ENCODE measurements at regions of chr13 and their contacts with region 1.

Region 1: GRCh38 chr13:110715395-110716235 is 2.1 kb downstream of the ING1 start:
- DNase-seq: peak; percentile 98
- ATAC-seq: peak; percentile 67
- H3K4me3 Mint-ChIP-seq: peak overlapping the region; percentile 87
- H3K27ac Mint-ChIP-seq: peak overlapping the region; percentile 97
- H3K4me1 Mint-ChIP-seq: peaks cover 29% of the 10 kb centered on the region
- H3K27me3 Mint-ChIP-seq: no peaks in the 10 kb centered on the region

Region 2: DNA sequence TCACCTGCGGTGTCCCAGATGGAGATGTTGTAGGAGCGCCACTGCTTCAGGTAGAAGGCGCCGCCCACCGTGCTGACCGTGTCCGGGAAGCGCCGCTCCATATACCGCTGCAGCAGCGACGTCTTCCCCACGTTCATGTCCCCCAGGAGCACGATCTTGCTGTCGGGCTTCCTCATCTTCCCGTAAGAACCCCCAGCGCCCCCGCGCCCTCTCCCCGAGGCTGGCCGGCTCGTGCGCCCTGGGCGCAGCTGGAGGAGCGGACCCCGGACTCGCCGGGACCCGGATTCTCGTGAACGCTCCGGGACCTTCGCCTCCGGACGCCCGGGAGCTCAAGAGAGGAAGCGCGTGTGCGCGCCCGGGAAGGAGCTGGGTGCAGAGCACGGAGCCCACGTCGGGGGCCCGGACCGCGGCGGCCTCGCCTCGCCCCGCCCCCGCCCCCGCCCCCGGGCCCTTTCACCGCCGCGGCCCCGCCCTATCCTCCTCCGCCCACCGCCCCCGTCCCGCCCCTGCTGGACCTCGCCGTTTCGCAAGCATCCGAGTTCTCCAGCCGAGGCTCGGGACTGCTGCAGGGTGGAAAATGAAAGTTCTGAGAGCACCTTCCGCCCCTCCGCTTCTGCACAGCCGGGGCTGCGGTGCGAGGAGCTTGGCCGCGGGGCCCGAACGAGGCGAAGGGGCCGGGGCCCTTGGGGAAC is 154.1 kb before region 1 on chr13 and contains the start of gene RAB20:
- CTCF ChIA-PET with region 1: no interaction called
- POLR2A ChIA-PET with region 1: no interaction called
- intact Hi-C with region 1: loop called in 1 of 2 experiments (anchors 2 kb)
- DNase-seq: peak; percentile 76
- ATAC-seq: peak; percentile 79
- H3K4me3 Mint-ChIP-seq: peak within 1 kb of the TSS; percentile 77
- H3K27ac Mint-ChIP-seq: peak within 1 kb of the TSS; percentile 85
- H3K4me1 Mint-ChIP-seq: peaks cover 18% of the 10 kb centered on the region
- H3K27me3 Mint-ChIP-seq: peaks cover 4% of the 10 kb centered on the region
- total RNA-seq, gene RAB20: 6.0 to 9.0 TPM

Region 3: GRCh38 chr13:110615322-110616102 is 100.1 kb before region 1 on chr13 and contains the start of gene NAXD:
- CTCF ChIA-PET with region 1: no interaction called
- POLR2A ChIA-PET with region 1: interaction called, 4 read pairs
- intact Hi-C with region 1: loop called (anchors 1 kb)
- DNase-seq: peak; percentile 92
- ATAC-seq: peak; percentile 94
- H3K4me3 Mint-ChIP-seq: peak within 1 kb of the TSS; percentile 88
- H3K27ac Mint-ChIP-seq: peak within 1 kb of the TSS; percentile 96
- H3K4me1 Mint-ChIP-seq: peaks cover 41% of the 10 kb centered on the region
- H3K27me3 Mint-ChIP-seq: no peaks in the 10 kb centered on the region
- total RNA-seq, gene NAXD: 19.6 to 23.3 TPM

Region 4: DNA sequence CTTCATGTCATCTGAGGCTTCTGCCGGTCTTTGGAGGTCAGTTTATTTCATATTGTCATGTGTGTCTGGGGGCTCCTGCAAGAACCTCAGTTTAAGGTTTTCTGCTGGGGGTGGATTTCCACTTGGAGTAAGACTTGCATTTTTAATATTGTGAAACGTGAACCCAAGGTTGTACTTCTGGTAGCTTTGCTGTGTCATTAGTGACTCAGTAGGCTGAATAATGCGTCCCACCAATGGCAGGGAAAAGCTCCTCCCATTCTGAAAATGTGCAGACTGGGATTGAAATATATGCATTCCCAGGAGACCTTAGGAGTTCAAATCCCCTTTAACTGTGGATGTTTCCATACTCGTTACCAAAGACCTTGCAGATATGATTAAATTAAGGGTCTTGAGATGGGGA is 44.1 kb after region 1 on chr13:
- CTCF ChIA-PET with region 1: no interaction called
- POLR2A ChIA-PET with region 1: no interaction called
- intact Hi-C with region 1: no loop called
- DNase-seq: no peak
- ATAC-seq: no peak
- H3K4me3 Mint-ChIP-seq: no peak overlapping the region
- H3K27ac Mint-ChIP-seq: no peak overlapping the region
- H3K4me1 Mint-ChIP-seq: no peaks in the 10 kb centered on the region
- H3K27me3 Mint-ChIP-seq: peaks cover 19% of the 10 kb centered on the region

Region 5: GRCh38 chr13:110819203-110820014 is 103.8 kb after region 1 on chr13:
- CTCF ChIA-PET with region 1: interaction called, 3 read pairs
- POLR2A ChIA-PET with region 1: interaction called, 4 read pairs
- intact Hi-C with region 1: loop called in 1 of 2 experiments (anchors 5 kb)
- DNase-seq: peak; percentile 89
- ATAC-seq: peak; percentile 89
- H3K4me3 Mint-ChIP-seq: no peak overlapping the region
- H3K27ac Mint-ChIP-seq: no peak overlapping the region
- H3K4me1 Mint-ChIP-seq: peaks cover 5% of the 10 kb centered on the region
- H3K27me3 Mint-ChIP-seq: peaks cover 3% of the 10 kb centered on the region

Region 6: DNA sequence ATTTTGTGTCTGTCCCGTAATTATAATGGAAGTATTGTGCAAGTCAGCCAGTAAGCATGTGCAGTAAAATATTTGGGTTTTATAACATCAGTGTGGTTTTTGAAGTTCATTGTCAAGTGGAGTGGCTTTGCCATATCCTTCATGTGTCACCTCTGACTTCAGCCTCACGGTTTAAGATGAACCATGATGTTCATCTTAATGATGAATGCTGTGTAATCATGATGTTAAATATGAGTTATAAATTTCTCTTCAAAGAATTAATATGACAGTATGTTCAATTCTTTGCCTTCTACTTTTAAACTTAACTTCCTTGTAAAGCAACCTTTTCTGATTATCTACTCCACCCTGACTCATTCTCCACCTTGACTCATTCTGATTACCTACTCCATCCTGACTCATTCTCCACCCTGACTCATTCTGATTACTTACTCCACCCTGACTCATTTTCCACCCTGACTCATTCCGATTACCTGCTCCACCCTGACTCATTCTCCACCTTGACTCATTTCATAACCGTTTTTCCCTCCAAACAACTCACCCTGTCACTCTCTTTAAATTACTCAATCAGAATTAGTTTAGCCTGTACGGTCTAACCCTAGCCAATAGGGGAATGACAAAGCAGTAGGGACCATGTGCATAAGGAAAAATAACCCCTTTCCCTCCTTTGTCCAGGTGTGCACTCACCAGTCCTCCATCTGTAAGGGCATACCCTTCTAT is 249.6 kb after region 1 on chr13:
- CTCF ChIA-PET with region 1: no interaction called
- POLR2A ChIA-PET with region 1: no interaction called
- intact Hi-C with region 1: loop called in 1 of 2 experiments (anchors 2 kb)
- DNase-seq: peak; percentile 55
- ATAC-seq: peak; percentile 92
- H3K4me3 Mint-ChIP-seq: peak overlapping the region; percentile 39
- H3K27ac Mint-ChIP-seq: peak overlapping the region; percentile 78
- H3K4me1 Mint-ChIP-seq: peaks cover 18% of the 10 kb centered on the region
- H3K27me3 Mint-ChIP-seq: peaks cover 8% of the 10 kb centered on the region

Region 7: DNA sequence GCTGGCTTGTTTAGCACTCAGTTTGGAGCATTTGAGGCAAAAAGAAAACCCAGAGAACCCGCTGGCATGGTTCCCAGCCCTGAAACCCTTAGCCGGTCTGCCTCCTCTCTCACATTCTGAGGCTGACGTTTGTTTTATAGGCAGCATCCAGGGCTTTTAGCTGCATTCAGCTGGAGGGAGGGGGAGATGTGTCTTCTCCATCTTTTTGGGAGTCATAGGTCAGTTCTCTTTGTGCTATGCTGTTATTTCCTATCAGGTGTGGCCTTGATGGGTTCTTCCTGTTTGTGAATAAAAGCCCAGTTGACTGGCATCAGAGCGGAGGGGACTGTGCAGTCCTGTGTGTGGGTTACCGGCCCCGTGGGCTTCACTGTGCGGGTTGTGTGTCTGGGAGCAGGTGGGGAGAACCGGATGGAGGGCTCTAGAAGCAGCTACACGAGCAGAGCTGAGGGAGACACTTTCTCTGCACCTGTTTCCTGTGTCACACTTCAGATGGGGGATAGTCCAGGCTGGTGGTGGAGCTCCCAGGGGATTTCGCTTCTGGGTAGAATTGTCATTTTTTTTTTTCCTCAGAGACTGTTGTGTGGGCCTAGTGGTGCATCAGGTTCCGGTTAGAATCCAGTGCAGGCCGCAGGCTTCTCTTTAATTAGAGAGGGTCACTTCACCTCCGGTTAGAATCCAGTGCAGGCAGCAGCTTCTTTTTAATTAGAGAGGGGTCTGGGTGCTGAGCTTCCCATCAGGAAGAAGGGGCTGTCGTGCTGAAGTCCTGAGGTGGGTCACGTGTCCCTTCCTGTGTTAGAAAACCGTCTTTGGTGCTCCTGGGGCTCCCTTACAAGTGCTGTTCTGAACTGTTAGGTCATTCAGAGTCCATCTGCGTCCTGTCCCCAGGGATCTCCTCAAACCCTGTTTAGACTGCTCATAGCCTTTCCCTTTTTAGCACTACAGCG is 469.1 kb after region 1 on chr13:
- CTCF ChIA-PET with region 1: no interaction called
- POLR2A ChIA-PET with region 1: interaction called, 8 read pairs
- intact Hi-C with region 1: loop called (anchors 10 kb)
- DNase-seq: peak; percentile 55
- ATAC-seq: peak; percentile 69
- H3K4me3 Mint-ChIP-seq: peak overlapping the region; percentile 53
- H3K27ac Mint-ChIP-seq: peak overlapping the region; percentile 83
- H3K4me1 Mint-ChIP-seq: peaks cover 95% of the 10 kb centered on the region
- H3K27me3 Mint-ChIP-seq: no peaks in the 10 kb centered on the region

Region 8: GRCh38 chr13:112689303-112690165 is 1973.9 kb after region 1 on chr13 and contains the start of gene ATP11A:
- CTCF ChIA-PET with region 1: no interaction called
- POLR2A ChIA-PET with region 1: no interaction called
- intact Hi-C with region 1: loop called in 1 of 2 experiments (anchors 2 kb)
- DNase-seq: peak; percentile 90
- ATAC-seq: peak; percentile 84
- H3K4me3 Mint-ChIP-seq: peak within 1 kb of the TSS; percentile 84
- H3K27ac Mint-ChIP-seq: peak within 1 kb of the TSS; percentile 91
- H3K4me1 Mint-ChIP-seq: peaks cover 49% of the 10 kb centered on the region
- H3K27me3 Mint-ChIP-seq: no peaks in the 10 kb centered on the region
- total RNA-seq, gene ATP11A: 42.1 to 50.7 TPM